Calu3 (cell line): ENCODE measurements at regions of chr10 and their contacts with region 1.

Region 1: DNA sequence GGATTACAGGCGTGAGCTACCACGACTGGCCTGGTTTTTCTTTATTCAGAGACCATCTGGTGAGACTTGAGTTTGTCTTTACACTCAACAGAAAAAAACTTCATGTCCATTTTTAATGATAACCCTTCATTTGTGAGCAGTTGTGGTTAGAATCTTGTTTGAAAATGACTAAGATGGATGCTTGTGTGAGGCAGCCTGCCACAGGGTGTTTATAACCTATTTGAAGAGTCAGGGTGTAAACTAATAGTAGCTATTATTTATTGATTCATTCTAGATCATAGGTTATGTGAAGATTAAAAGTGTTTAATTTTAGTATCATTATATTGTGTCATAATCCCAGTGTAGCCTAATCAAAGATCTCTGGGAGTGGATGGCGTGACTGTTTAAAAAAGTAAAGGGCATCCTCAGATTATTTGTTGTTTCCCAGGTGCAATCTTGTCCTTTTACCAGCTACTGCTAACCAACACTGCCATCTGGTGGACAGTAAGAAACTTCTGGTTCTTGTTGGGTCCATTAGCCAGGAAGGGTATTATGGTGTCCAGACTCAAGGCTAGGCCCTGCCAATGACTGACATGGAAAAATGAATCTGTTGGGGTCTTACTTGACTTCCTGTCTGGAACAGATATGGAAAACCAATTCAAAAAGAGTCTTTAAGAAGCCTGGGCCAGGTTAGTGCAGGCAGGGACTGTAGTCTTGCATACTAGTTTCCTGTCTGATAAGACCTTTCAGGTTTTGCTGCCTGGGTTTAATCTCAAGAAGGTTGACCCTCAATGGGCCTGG is 24.9 kb downstream of the NRBF2 start:
- DNase-seq: peak; percentile 59
- H3K4me3 Mint-ChIP-seq: no peak overlapping the region
- H3K27ac Mint-ChIP-seq: no peak overlapping the region
- H3K4me1 Mint-ChIP-seq: no peaks in the 10 kb centered on the region
- H3K27me3 Mint-ChIP-seq: no peaks in the 10 kb centered on the region
- CTCF ChIP-seq: peak; percentile 82

Region 2: DNA sequence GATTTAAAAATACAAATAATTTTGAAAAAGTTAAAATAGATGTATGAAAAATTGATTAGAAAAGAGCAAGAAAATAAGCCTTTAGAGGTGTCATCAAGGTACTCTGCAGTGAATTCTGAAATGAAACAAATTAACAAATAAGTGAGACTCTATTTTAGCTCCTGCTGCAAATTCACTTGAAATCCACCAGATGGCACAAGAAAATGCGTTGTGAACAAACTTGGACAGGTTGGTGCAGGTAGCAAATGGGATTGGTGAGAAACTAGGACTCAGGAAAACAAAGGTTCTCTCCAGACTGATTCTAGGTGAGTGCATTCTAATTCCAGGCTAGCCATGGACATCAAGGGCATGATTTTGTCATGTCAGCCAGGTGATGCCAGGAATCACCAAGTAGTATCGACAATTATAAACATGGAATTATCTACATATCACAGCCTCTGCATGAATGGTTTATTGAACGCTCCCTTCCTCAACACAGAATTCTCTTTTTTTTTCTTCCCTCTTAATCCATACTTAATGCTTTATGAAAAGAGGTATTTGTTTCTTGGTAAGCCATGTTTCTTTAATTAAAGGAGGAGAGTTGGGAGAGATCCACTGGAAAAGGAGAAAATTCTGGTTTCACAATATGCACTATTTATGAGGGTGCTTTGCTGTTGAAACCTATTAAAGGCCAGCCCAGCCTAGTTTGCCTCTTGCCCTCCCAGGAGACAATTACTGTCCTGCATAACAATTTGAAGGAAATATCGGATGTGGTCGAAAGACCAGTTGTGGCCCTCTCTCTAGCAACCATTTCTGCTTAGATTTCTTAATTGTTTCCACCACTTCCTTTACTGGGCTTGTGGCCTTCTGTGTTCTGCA is 665.8 kb before region 1 on chr10:
- CTCF ChIA-PET with region 1: no interaction called
- intact Hi-C with region 1: loop called (anchors 5 kb)
- DNase-seq: peak; percentile 33
- H3K4me3 Mint-ChIP-seq: no peak overlapping the region
- H3K27ac Mint-ChIP-seq: no peak overlapping the region
- H3K4me1 Mint-ChIP-seq: no peaks in the 10 kb centered on the region
- H3K27me3 Mint-ChIP-seq: no peaks in the 10 kb centered on the region
- CTCF ChIP-seq: peak; percentile 57

Region 3: DNA sequence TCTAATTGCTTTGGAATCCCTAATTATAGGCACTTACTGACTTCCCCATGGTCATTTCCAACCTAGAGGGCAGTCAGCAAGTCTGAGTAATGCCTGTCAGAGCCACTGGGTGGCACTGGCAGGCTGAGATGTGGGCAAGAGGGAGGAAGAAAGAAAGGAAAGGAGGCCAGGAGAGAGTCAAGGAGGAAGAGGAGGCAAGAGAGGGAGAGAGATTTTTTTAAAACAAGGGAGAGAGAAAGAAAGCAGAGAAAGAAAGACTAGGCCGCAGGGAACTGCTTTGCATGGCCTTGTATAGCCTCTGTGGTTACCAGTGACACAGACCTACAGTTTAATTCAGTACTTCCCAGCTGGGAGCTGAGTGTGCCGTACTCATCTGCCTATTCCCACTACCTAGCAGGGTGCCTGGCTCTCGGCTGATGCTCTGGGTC is 563.9 kb before region 1 on chr10:
- CTCF ChIA-PET with region 1: interaction called, 4 read pairs
- intact Hi-C with region 1: loop called (anchors 1 kb)
- DNase-seq: peak; percentile 77
- H3K4me3 Mint-ChIP-seq: no peak overlapping the region
- H3K27ac Mint-ChIP-seq: no peak overlapping the region
- H3K4me1 Mint-ChIP-seq: no peaks in the 10 kb centered on the region
- H3K27me3 Mint-ChIP-seq: no peaks in the 10 kb centered on the region
- CTCF ChIP-seq: peak; percentile 94

Region 4: DNA sequence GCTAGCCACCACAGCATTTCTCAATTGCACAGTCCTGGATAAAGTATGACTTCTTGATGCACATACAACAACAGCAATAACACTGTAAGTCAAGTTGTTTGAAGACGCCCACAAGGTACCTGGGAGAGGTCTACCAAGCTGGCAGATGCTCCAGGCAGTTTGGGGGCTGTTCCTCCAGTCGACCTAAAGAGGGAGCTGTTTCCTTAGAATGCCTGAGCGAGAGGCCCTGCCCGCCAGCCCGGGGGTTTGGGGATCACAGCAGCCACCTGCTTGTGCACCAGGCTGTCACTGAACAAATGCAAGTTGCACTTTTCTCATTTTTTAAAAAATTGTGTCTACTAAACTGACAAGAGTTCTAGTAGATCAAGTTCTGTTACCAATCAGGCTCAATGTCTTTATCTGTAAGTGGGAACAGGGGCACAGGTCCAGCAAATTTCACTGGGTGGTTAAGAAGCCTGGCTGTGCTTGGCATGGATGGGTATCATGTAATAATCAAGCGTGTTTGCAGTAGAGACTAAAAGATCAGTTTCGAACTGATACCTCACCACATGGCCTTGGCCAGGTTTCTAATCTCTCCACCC is 547.3 kb before region 1 on chr10:
- CTCF ChIA-PET with region 1: interaction called, 4 read pairs
- intact Hi-C with region 1: loop called (anchors 5 kb)
- DNase-seq: peak; percentile 82
- H3K4me3 Mint-ChIP-seq: no peak overlapping the region
- H3K27ac Mint-ChIP-seq: no peak overlapping the region
- H3K4me1 Mint-ChIP-seq: no peaks in the 10 kb centered on the region
- H3K27me3 Mint-ChIP-seq: no peaks in the 10 kb centered on the region
- CTCF ChIP-seq: peak; percentile 94

Region 5: GRCh38 chr10:63003816-63004453 is 154.1 kb before region 1 on chr10:
- CTCF ChIA-PET with region 1: no interaction called
- intact Hi-C with region 1: loop called (anchors 10 kb)
- DNase-seq: no peak
- H3K4me3 Mint-ChIP-seq: no peak overlapping the region
- H3K27ac Mint-ChIP-seq: no peak overlapping the region
- H3K4me1 Mint-ChIP-seq: no peaks in the 10 kb centered on the region
- H3K27me3 Mint-ChIP-seq: peaks cover 14% of the 10 kb centered on the region
- CTCF ChIP-seq: peak; percentile 30